Common myeloid progenitor, CD34-positive (primary cell): ENCODE measurements at regions of chr16 and their contacts with region 1.

Region 1: GRCh38 chr16:29790183-29790952 is at the start of gene KIF22:
- DNase-seq: peak; percentile 99 to 100 (median 99)
- H3K4me3 ChIP-seq: peak within 1 kb of the TSS; percentile 83 to 100 (median 97)
- H3K27ac ChIP-seq: peak within 1 kb of the TSS; percentile 72 to 86
- H3K4me1 ChIP-seq: peaks cover 12 to 34% (median 26%) of the 10 kb centered on the region in 4 experiments
- H3K27me3 ChIP-seq: no peaks in the 10 kb centered on the region

Region 2: GRCh38 chr16:29729116-29729521 is 61.2 kb before region 1 on chr16:
- CTCF ChIA-PET with region 1: interaction called, 16 read pairs
- POLR2A ChIA-PET with region 1: interaction called, 4 read pairs
- DNase-seq: peak in 2 of 3 donors; percentile 38 to 41
- H3K4me3 ChIP-seq: peak overlapping the region in 1 of 7 experiments; percentile 45
- H3K27ac ChIP-seq: no peak overlapping the region
- H3K4me1 ChIP-seq: peaks cover 0 to 5% (median 0%) of the 10 kb centered on the region in 4 experiments
- H3K27me3 ChIP-seq: no peaks in the 10 kb centered on the region

Region 3: DNA sequence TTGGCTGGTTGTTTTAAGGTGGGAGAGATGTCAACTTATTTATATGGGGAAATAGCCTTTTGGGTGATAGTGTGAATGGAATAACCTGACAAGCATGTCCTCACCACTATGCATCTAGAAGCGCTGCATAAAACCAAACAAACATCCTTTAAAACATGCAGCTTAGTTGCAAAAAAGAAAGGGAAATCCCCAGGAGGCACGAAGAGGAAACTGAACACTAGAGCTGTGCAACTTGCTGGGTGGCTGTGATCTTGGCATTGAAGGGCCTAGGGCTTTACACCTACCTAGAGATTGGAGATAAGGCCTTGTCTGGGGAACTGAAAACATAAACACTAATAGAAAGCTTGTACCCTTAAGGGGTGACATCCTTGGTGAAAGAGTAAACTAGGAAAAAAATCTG is 51.9 kb before region 1 on chr16:
- CTCF ChIA-PET with region 1: interaction called, 11 read pairs
- POLR2A ChIA-PET with region 1: no interaction called
- DNase-seq: peak in 2 of 3 donors; percentile 52 to 60
- H3K4me3 ChIP-seq: no peak overlapping the region
- H3K27ac ChIP-seq: no peak overlapping the region
- H3K4me1 ChIP-seq: peaks cover 0 to 30% (median 16%) of the 10 kb centered on the region in 4 experiments
- H3K27me3 ChIP-seq: no peaks in the 10 kb centered on the region

Region 4: GRCh38 chr16:29745121-29745852 is 45.1 kb before region 1 on chr16:
- CTCF ChIA-PET with region 1: interaction called, 9 read pairs
- POLR2A ChIA-PET with region 1: interaction called, 10 read pairs
- DNase-seq: peak; percentile 72 to 92 (median 88)
- H3K4me3 ChIP-seq: peak overlapping the region; percentile 44 to 89 (median 85)
- H3K27ac ChIP-seq: peak overlapping the region; percentile 98 to 99
- H3K4me1 ChIP-seq: peaks cover 5 to 68% (median 50%) of the 10 kb centered on the region in 4 experiments
- H3K27me3 ChIP-seq: no peaks in the 10 kb centered on the region

Region 5: GRCh38 chr16:29805378-29806098 is 15.2 kb after region 1 on chr16:
- CTCF ChIA-PET with region 1: interaction called, 28 read pairs
- POLR2A ChIA-PET with region 1: interaction called, 9 read pairs
- DNase-seq: peak; percentile 98 to 100 (median 99)
- H3K4me3 ChIP-seq: peak overlapping the region; percentile 62 to 94 (median 79)
- H3K27ac ChIP-seq: peak overlapping the region; percentile 83 to 94
- H3K4me1 ChIP-seq: peaks cover 8 to 52% (median 42%) of the 10 kb centered on the region in 4 experiments
- H3K27me3 ChIP-seq: no peaks in the 10 kb centered on the region

Region 6: DNA sequence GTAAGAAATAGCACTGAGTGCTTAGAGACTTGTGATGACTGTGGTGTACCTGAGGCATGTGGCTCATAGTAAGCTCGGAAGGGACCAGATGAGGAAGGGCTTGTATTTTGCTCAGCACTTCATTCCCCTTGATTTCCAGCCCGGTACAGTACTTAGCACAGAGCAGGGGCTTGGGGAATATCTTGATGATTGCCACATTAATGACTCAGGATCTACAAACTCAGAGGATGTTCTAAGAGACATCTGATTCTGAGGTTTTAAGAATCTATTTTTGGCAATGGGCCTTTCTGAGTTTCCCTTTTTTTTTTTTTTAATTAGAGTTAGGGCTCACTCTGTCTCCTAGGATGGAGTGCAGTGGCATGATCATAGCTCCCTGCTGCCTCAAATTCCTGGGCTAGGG is 119.0 kb after region 1 on chr16:
- CTCF ChIA-PET with region 1: no interaction called
- POLR2A ChIA-PET with region 1: no interaction called
- DNase-seq: no peak
- H3K4me3 ChIP-seq: no peak overlapping the region
- H3K27ac ChIP-seq: no peak overlapping the region
- H3K4me1 ChIP-seq: peaks cover 0 to 9% (median 1%) of the 10 kb centered on the region in 4 experiments
- H3K27me3 ChIP-seq: no peaks in the 10 kb centered on the region